ENCODE measurements at regions of chr13 and their contacts with region 1.

Region 1: DNA sequence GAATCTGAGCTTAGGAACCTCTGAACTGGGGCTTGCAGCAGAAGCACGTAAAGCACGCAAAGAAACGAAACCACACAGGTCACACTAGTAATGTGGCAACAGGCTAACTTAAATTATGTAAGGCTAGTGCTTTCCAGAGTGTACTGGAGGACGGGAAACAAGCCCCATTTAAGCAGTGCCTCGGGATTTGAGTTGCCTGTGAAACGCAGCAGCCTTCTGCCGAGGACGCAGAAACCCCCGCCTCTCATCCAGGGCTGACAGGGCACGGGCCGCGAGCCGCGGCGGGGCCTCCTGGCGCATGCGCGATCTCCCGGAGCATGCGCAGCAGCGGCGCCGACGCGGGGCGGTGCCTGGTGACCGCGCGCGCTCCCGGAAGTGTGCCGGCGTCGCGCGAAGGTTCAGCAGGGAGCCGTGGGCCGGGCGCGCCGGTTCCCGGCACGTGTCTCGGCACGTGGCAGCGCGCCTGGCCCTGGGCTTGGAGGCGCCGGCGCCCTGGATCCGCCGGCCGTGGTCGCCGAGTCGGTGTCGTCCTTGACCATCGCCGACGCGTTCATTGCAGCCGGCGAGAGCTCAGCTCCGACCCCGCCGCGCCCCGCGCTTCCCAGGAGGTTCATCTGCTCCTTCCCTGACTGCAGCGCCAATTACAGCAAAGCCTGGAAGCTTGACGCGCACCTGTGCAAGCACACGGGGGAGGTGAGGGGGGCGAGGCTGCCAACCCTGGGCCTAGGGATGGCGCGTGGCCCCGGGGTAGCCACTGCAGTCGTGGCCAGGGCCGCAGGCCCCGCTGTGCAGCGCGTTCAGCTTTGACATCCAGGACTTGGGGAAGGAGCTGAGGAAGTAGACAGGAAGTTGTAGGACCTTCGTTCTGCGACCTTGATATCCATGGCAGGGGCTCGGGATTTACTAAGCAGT is at the start of gene GTF3A:
- DNase-seq: peak; percentile 74 to 95 (median 87)
- ATAC-seq: peak; percentile 57
- H3K4me3 ChIP-seq: peak within 1 kb of the TSS; percentile 76 to 83
- H3K4me3 Mint-ChIP-seq: peak within 1 kb of the TSS; percentile 82
- H3K27ac ChIP-seq: peak within 1 kb of the TSS; percentile 85 to 95
- H3K27ac Mint-ChIP-seq: peak within 1 kb of the TSS; percentile 97
- H3K4me1 ChIP-seq: peaks cover 43% of the 10 kb centered on the region
- H3K4me1 Mint-ChIP-seq: peaks cover 48% of the 10 kb centered on the region
- H3K27me3 ChIP-seq: no peaks in the 10 kb centered on the region
- H3K27me3 Mint-ChIP-seq: no peaks in the 10 kb centered on the region
- CTCF ChIP-seq: no peak
- total RNA-seq, gene GTF3A: 157 TPM

Region 2: DNA sequence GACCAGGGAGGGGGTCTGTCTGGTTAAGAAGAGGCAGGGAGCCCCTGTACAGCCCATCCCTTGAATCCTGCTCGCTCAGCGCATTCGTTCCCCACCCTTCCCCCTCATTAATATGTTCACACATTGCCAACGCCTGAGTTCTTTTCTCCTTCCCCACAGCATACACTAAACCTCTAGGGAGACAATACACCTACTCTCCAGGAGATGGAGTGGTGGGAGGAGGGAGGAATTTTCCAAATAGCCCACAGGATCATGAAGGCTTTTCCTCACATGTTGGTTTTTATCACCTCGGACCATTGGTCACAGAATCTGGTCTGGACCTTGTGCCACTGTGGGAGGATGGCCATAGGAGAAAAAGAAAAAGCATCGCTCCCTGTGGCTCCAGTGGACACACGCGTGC is 1667.6 kb before region 1 on chr13:
- CTCF ChIA-PET with region 1: no interaction called
- POLR2A ChIA-PET with region 1: no interaction called
- intact Hi-C with region 1: no loop called
- DNase-seq: no peak
- ATAC-seq: no peak
- H3K4me3 ChIP-seq: no peak overlapping the region
- H3K4me3 Mint-ChIP-seq: no peak overlapping the region
- H3K27ac ChIP-seq: no peak overlapping the region
- H3K27ac Mint-ChIP-seq: no peak overlapping the region
- H3K4me1 ChIP-seq: no peaks in the 10 kb centered on the region
- H3K4me1 Mint-ChIP-seq: no peaks in the 10 kb centered on the region
- H3K27me3 ChIP-seq: no peaks in the 10 kb centered on the region
- H3K27me3 Mint-ChIP-seq: peaks cover 7% of the 10 kb centered on the region
- CTCF ChIP-seq: no peak

Region 3: GRCh38 chr13:26221721-26222519 is 1202.6 kb before region 1 on chr13 and contains the start of gene RNF6:
- CTCF ChIA-PET with region 1: no interaction called
- POLR2A ChIA-PET with region 1: no interaction called
- intact Hi-C with region 1: loop called in 1 of 2 experiments (anchors 10 kb)
- DNase-seq: peak; percentile 73 to 97 (median 86)
- ATAC-seq: peak; percentile 92
- H3K4me3 ChIP-seq: peak within 1 kb of the TSS; percentile 97 to 99
- H3K4me3 Mint-ChIP-seq: peak within 1 kb of the TSS; percentile 99
- H3K27ac ChIP-seq: peak within 1 kb of the TSS; percentile 90 to 98
- H3K27ac Mint-ChIP-seq: peak within 1 kb of the TSS; percentile 100
- H3K4me1 ChIP-seq: peaks cover 26% of the 10 kb centered on the region
- H3K4me1 Mint-ChIP-seq: peaks cover 45% of the 10 kb centered on the region
- H3K27me3 ChIP-seq: no peaks in the 10 kb centered on the region
- H3K27me3 Mint-ChIP-seq: no peaks in the 10 kb centered on the region
- CTCF ChIP-seq: no peak
- total RNA-seq, gene RNF6: 50.3 to 55.0 TPM

Region 4: DNA sequence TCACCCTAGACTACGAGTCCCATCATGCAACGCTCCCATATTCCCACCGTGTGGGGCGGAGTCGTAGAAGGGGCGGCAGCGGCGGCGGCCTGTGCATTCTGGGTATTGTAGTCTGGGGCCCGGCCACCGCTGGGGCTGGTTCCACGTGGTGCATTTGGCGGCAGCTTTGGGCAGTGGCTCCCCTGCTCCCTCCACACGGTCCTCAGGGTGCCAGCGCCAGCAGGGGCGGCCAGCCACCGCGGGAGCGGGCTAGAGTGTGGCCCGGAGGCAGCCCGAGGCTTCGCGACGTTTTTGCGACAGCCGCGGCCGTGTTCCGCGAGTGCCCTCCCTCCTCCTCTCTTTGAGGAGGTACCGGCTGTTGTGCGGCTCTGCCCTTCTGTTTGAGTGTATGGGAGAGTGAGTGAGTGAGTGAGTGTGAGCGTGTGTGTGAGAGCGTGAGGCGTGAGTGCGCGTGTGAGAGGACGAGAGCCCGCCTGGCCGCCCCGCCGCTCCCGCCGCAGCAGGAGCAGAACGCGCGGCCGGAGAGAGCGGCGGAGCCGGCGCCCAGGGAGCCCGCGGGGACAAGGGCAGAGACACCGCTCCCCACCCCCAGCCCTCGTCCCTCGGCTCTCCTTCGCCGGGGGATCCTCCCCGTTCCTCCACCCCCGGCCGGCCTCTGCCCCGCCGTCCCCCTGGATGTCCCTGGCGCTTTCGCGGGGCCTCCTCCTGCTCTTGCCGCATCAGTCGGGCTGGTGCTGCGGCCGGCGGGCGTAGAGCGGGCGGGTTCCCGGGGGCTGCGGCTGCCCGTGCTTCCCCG is 1170.5 kb before region 1 on chr13 and contains the start of gene CDK8:
- CTCF ChIA-PET with region 1: no interaction called
- POLR2A ChIA-PET with region 1: no interaction called
- intact Hi-C with region 1: loop called in 1 of 2 experiments (anchors 5 kb)
- DNase-seq: peak; percentile 78 to 95 (median 90)
- ATAC-seq: peak; percentile 87
- H3K4me3 ChIP-seq: peak within 1 kb of the TSS; percentile 79 to 100
- H3K4me3 Mint-ChIP-seq: peak within 1 kb of the TSS; percentile 90
- H3K27ac ChIP-seq: peak within 1 kb of the TSS; percentile 59 to 92
- H3K27ac Mint-ChIP-seq: peak within 1 kb of the TSS; percentile 88
- H3K4me1 ChIP-seq: peaks cover 27% of the 10 kb centered on the region
- H3K4me1 Mint-ChIP-seq: peaks cover 37% of the 10 kb centered on the region
- H3K27me3 ChIP-seq: no peaks in the 10 kb centered on the region
- H3K27me3 Mint-ChIP-seq: peaks cover 2% of the 10 kb centered on the region
- CTCF ChIP-seq: no peak
- total RNA-seq, gene CDK8: 4.9 to 5.3 TPM

Region 5: GRCh38 chr13:27406178-27406939 is 18.1 kb before region 1 on chr13:
- CTCF ChIA-PET with region 1: interaction called, 19 read pairs
- POLR2A ChIA-PET with region 1: interaction called, 3 read pairs
- intact Hi-C with region 1: loop called (anchors 1 kb)
- DNase-seq: peak in 7 of 9 experiments; percentile 18 to 77 (median 44)
- ATAC-seq: peak; percentile 56
- H3K4me3 ChIP-seq: no peak overlapping the region
- H3K4me3 Mint-ChIP-seq: no peak overlapping the region
- H3K27ac ChIP-seq: no peak overlapping the region
- H3K27ac Mint-ChIP-seq: no peak overlapping the region
- H3K4me1 ChIP-seq: no peaks in the 10 kb centered on the region
- H3K4me1 Mint-ChIP-seq: peaks cover 4% of the 10 kb centered on the region
- H3K27me3 ChIP-seq: no peaks in the 10 kb centered on the region
- H3K27me3 Mint-ChIP-seq: no peaks in the 10 kb centered on the region
- CTCF ChIP-seq: peak; percentile 54

Region 6: GRCh38 chr13:27442071-27442647 is 17.7 kb after region 1 on chr13:
- CTCF ChIA-PET with region 1: interaction called, 33 read pairs
- POLR2A ChIA-PET with region 1: interaction called, 171 read pairs
- intact Hi-C with region 1: no loop called
- DNase-seq: peak in 6 of 9 experiments; percentile 38 to 74 (median 58)
- ATAC-seq: peak; percentile 50
- H3K4me3 ChIP-seq: peak overlapping the region; percentile 4 to 14
- H3K4me3 Mint-ChIP-seq: peak overlapping the region; percentile 68
- H3K27ac ChIP-seq: peak overlapping the region; percentile 29 to 62
- H3K27ac Mint-ChIP-seq: peak overlapping the region; percentile 87
- H3K4me1 ChIP-seq: peaks cover 55% of the 10 kb centered on the region
- H3K4me1 Mint-ChIP-seq: peaks cover 56% of the 10 kb centered on the region
- H3K27me3 ChIP-seq: no peaks in the 10 kb centered on the region
- H3K27me3 Mint-ChIP-seq: no peaks in the 10 kb centered on the region
- CTCF ChIP-seq: no peak

Region 7: GRCh38 chr13:27455331-27455855 is 30.9 kb after region 1 on chr13:
- CTCF ChIA-PET with region 1: interaction called, 62 read pairs
- POLR2A ChIA-PET with region 1: interaction called, 171 read pairs
- intact Hi-C with region 1: loop called (anchors 1 kb)
- DNase-seq: peak in 2 of 9 experiments; percentile 19 to 51
- ATAC-seq: no peak
- H3K4me3 ChIP-seq: peak overlapping the region; percentile 54
- H3K4me3 Mint-ChIP-seq: peak overlapping the region; percentile 91
- H3K27ac ChIP-seq: peak overlapping the region; percentile 46 to 76
- H3K27ac Mint-ChIP-seq: peak overlapping the region; percentile 97
- H3K4me1 ChIP-seq: peaks cover 25% of the 10 kb centered on the region
- H3K4me1 Mint-ChIP-seq: peaks cover 30% of the 10 kb centered on the region
- H3K27me3 ChIP-seq: no peaks in the 10 kb centered on the region
- H3K27me3 Mint-ChIP-seq: no peaks in the 10 kb centered on the region
- CTCF ChIP-seq: no peak

Region 8: DNA sequence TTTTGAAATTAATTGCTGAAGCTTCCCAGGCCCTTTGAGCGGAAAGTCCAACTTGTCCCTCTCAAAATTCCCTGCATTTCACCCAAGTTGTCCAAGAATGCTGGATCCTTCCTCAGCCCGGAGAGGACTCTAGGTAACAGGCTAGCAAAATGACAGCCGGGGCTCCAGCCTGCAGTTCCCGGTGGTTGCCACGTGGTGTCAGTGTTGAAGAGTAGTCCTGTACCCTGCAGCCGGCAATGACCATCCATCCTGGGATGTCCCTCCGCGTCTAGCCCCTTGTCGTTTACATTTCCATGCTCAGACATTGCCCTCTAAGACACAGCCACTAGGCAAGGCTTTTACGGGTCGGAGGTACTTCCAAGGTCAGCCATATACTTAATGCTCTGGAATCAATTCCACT is 57.3 kb after region 1 on chr13:
- CTCF ChIA-PET with region 1: no interaction called
- POLR2A ChIA-PET with region 1: no interaction called
- intact Hi-C with region 1: no loop called
- DNase-seq: peak in 3 of 9 experiments; percentile 13 to 20 (median 19)
- ATAC-seq: peak; percentile 40
- H3K4me3 ChIP-seq: no peak overlapping the region
- H3K4me3 Mint-ChIP-seq: no peak overlapping the region
- H3K27ac ChIP-seq: no peak overlapping the region
- H3K27ac Mint-ChIP-seq: no peak overlapping the region
- H3K4me1 ChIP-seq: no peaks in the 10 kb centered on the region
- H3K4me1 Mint-ChIP-seq: peaks cover 11% of the 10 kb centered on the region
- H3K27me3 ChIP-seq: no peaks in the 10 kb centered on the region
- H3K27me3 Mint-ChIP-seq: peaks cover 5% of the 10 kb centered on the region
- CTCF ChIP-seq: peak; percentile 22

Region 9: DNA sequence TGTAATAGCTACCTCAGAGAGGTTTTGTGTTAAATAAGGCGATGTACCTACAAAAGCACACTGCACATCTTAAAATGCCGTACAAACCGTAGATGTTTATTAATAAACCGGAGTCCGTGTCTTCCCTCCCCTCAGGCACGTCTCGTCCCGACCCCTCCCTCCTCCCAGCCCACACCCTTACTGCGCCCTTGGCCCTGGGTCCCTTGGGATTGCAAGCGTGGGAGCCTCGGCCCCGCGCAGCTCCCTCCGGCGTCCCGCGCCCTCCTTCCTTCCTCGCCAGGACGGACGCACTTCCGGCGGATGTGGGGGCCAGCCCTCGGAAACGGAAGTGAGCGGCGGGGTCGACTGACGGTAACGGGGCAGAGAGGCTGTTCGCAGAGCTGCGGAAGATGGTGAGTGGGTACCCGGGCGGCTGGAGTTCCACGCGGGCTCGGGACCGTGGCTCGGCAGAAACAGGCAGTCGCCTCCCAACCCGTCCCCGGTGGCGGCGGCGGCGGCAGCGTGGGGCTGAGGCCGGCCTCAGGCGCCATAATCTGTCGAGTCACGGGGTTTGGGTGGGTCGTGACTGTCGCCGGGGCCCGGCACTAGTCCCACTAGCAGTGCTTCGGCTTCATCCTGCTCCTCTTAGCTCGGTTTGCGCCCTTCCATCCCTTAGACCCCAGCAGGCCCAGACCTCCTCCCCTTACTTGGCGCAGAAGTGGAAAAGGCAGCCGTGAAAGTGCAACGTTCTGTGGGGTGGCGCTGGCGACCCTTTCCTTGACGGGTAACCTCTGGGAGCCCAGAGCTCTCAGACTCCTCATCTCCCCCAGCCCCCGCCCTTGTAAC is 1234.5 kb after region 1 on chr13 and contains the start of gene POMP:
- CTCF ChIA-PET with region 1: no interaction called
- POLR2A ChIA-PET with region 1: no interaction called
- intact Hi-C with region 1: loop called (anchors 2 to 5 kb)
- DNase-seq: peak; percentile 79 to 95 (median 93)
- ATAC-seq: peak; percentile 77
- H3K4me3 ChIP-seq: peak within 1 kb of the TSS; percentile 72 to 73
- H3K4me3 Mint-ChIP-seq: peak within 1 kb of the TSS; percentile 98
- H3K27ac ChIP-seq: peak within 1 kb of the TSS; percentile 85 to 97
- H3K27ac Mint-ChIP-seq: peak within 1 kb of the TSS; percentile 99
- H3K4me1 ChIP-seq: peaks cover 33% of the 10 kb centered on the region
- H3K4me1 Mint-ChIP-seq: peaks cover 62% of the 10 kb centered on the region
- H3K27me3 ChIP-seq: no peaks in the 10 kb centered on the region
- H3K27me3 Mint-ChIP-seq: no peaks in the 10 kb centered on the region
- CTCF ChIP-seq: no peak
- total RNA-seq, gene POMP: 34.7 to 38.0 TPM

Measured in CD8-positive, alpha-beta T cell (primary cell).